ENCODE measurements at regions of chrX and their contacts with region 1.

Region 1: GRCh38 chrX:107776649-107777535 is 641 bp upstream of the NCBP2L start:
- DNase-seq: peak; percentile 13 to 87 (median 81)
- ATAC-seq: peak; percentile 91
- H3K4me3 ChIP-seq: peak overlapping the region; percentile 63
- H3K4me3 Mint-ChIP-seq: peak overlapping the region; percentile 80 to 96 (median 92)
- H3K27ac ChIP-seq: peak overlapping the region; percentile 64
- H3K27ac Mint-ChIP-seq: peak overlapping the region; percentile 82 to 95 (median 92)
- H3K4me1 ChIP-seq: no peaks in the 10 kb centered on the region
- H3K4me1 Mint-ChIP-seq: peaks cover 8 to 31% (median 19%) of the 10 kb centered on the region in 7 donors
- H3K27me3 ChIP-seq: no peaks in the 10 kb centered on the region
- H3K27me3 Mint-ChIP-seq: peaks cover 0 to 22% (median 0%) of the 10 kb centered on the region in 5 donors

Region 2: GRCh38 chrX:106894392-106894909 is 882.4 kb before region 1 on chrX:
- CTCF ChIA-PET with region 1: interaction called, 3 read pairs
- POLR2A ChIA-PET with region 1: no interaction called
- intact Hi-C with region 1: loop called (anchors 1 kb)
- DNase-seq: peak; percentile 13 to 57 (median 42)
- ATAC-seq: peak; percentile 74
- H3K4me3 ChIP-seq: no peak overlapping the region
- H3K4me3 Mint-ChIP-seq: no peak overlapping the region
- H3K27ac ChIP-seq: no peak overlapping the region
- H3K27ac Mint-ChIP-seq: no peak overlapping the region
- H3K4me1 ChIP-seq: no peaks in the 10 kb centered on the region
- H3K4me1 Mint-ChIP-seq: no peaks in the 10 kb centered on the region
- H3K27me3 ChIP-seq: no peaks in the 10 kb centered on the region
- H3K27me3 Mint-ChIP-seq: peaks cover 0 to 3% (median 0%) of the 10 kb centered on the region in 5 donors

Region 3: DNA sequence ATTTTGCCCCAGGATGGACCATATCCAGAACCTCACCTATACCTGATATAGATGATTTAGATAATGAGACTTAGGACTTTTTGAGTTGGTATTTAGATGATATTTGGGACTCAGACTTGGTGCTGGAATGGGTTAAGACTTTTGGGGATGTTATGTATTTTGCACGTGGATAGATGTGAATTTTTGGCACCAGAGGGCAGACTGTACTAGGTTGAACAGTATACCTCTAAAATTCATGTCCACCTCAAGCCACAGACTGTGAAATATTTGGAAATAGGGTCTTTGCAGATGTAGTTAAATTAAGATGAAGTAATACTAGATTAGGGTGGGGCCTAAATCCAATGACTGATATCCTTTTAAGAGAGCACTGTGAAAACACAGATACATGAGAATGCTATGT is 673.9 kb before region 1 on chrX:
- CTCF ChIA-PET with region 1: no interaction called
- POLR2A ChIA-PET with region 1: no interaction called
- intact Hi-C with region 1: loop called in 1 of 2 experiments (anchors 1 kb)
- DNase-seq: no peak
- ATAC-seq: no peak
- H3K4me3 ChIP-seq: no peak overlapping the region
- H3K4me3 Mint-ChIP-seq: no peak overlapping the region
- H3K27ac ChIP-seq: no peak overlapping the region
- H3K27ac Mint-ChIP-seq: no peak overlapping the region
- H3K4me1 ChIP-seq: no peaks in the 10 kb centered on the region
- H3K4me1 Mint-ChIP-seq: peaks cover 4 to 27% (median 14%) of the 10 kb centered on the region in 7 donors
- H3K27me3 ChIP-seq: no peaks in the 10 kb centered on the region
- H3K27me3 Mint-ChIP-seq: no peaks in the 10 kb centered on the region

Region 4: GRCh38 chrX:107672955-107673378 is 103.9 kb before region 1 on chrX:
- CTCF ChIA-PET with region 1: interaction called, 48 read pairs
- POLR2A ChIA-PET with region 1: interaction called, 47 read pairs
- intact Hi-C with region 1: loop called (anchors 1 kb)
- DNase-seq: peak; percentile 41 to 93 (median 88)
- ATAC-seq: peak; percentile 69
- H3K4me3 ChIP-seq: peak overlapping the region; percentile 58
- H3K4me3 Mint-ChIP-seq: peak overlapping the region; percentile 65 to 90 (median 84)
- H3K27ac ChIP-seq: peak overlapping the region; percentile 99
- H3K27ac Mint-ChIP-seq: peak overlapping the region; percentile 96 to 100 (median 98)
- H3K4me1 ChIP-seq: peaks cover 34 to 36% of the 10 kb centered on the region in 2 donors
- H3K4me1 Mint-ChIP-seq: peaks cover 14 to 72% (median 44%) of the 10 kb centered on the region in 7 donors
- H3K27me3 ChIP-seq: no peaks in the 10 kb centered on the region
- H3K27me3 Mint-ChIP-seq: no peaks in the 10 kb centered on the region

Region 5: DNA sequence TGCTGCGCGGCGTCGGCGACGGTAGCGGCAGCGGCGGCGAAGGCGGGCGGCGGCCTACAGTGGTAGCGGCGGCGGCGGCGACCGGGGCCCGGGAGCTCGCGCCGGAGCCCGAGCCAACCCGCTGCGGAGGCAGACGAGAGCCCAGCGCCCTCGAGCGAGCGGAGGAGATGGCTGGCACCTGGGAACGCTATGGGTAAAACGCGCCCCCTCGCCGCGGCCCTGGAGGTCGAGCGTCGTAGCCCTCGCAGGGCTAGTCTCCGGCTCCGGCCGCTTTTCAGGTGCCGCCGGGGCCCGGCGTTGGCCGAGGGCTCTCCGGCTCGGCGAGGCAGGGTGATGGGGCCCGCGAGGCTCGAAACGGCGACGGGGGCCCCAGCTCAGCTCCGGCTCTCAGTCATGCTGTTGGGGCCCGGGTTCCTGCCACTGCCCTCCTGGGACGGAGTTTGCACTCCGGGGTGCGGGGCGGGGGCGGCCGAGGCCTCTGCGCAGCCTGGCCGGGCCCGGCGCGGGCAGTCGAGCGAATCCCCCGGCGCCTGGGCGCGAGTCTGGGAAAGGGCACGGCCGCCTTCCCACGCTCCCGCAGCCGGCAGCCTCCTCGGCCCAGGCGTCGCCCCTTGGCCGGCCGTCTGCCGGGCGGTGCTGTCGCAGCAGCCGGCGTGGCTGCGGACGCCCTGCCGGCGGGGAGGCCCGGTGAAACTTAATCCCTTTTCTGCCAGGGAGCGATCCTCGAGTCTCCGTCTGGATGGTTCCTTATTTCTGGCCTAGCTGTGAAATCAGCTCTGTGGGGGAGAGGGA is 49.5 kb after region 1 on chrX:
- CTCF ChIA-PET with region 1: interaction called, 3 read pairs
- POLR2A ChIA-PET with region 1: interaction called, 5 read pairs
- intact Hi-C with region 1: loop called in 1 of 2 experiments (anchors 2 kb)
- DNase-seq: peak in 8 of 9 donors; percentile 9 to 53 (median 46)
- ATAC-seq: peak; percentile 77
- H3K4me3 ChIP-seq: peak overlapping the region; percentile 57
- H3K4me3 Mint-ChIP-seq: peak overlapping the region; percentile 78 to 92 (median 89)
- H3K27ac ChIP-seq: peak overlapping the region; percentile 80
- H3K27ac Mint-ChIP-seq: peak overlapping the region; percentile 44 to 95 (median 92)
- H3K4me1 ChIP-seq: peaks cover 0 to 7% of the 10 kb centered on the region in 2 donors
- H3K4me1 Mint-ChIP-seq: peaks cover 11 to 65% (median 43%) of the 10 kb centered on the region in 7 donors
- H3K27me3 ChIP-seq: no peaks in the 10 kb centered on the region
- H3K27me3 Mint-ChIP-seq: peaks cover 0 to 20% (median 0%) of the 10 kb centered on the region in 5 donors

Region 6: DNA sequence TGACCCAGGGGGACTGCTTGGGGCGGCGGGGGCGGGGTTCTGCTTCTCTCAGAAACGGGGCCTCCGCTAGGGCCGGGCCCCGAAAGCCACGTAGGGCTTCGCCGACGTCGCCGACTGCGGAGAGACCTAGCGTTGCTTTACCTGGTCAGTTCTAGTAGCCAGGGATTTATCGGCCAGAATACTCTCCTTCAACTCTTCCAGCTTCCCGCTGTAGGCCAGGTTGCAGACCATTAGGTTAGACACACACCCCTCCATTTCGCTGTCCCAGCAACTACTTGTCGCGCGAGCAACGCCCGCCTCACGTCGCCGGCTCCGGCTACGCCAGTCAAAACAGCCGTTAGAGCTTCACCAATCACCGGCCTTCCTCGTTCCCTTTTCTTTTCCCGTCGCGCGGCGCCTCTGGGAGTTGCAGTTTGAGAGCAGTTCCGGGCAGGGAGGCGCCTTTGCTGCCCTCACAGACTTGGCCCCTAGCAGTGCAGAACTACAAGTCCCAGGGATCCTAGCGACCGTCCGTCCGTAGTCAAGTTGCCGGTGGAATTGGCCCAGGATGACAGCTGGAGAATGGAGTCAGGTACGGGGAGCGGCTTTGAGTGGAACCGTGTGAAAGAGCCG is 314.5 kb after region 1 on chrX and contains the starts of genes ATG4A and PSMD10:
- CTCF ChIA-PET with region 1: no interaction called
- POLR2A ChIA-PET with region 1: no interaction called
- intact Hi-C with region 1: loop called (anchors 1 to 10 kb)
- DNase-seq: peak; percentile 65 to 91 (median 85)
- ATAC-seq: peak; percentile 97
- H3K4me3 ChIP-seq: peak within 1 kb of the TSS; percentile 85
- H3K4me3 Mint-ChIP-seq: no peak within 1 kb of the TSS
- H3K27ac ChIP-seq: peak within 1 kb of the TSS; percentile 88
- H3K27ac Mint-ChIP-seq: no peak within 1 kb of the TSS
- H3K4me1 ChIP-seq: no peaks in the 10 kb centered on the region
- H3K4me1 Mint-ChIP-seq: peaks cover 0 to 28% (median 15%) of the 10 kb centered on the region in 7 donors
- H3K27me3 ChIP-seq: no peaks in the 10 kb centered on the region
- H3K27me3 Mint-ChIP-seq: no peaks in the 10 kb centered on the region
- total RNA-seq, gene ATG4A: 6.7 to 11.4 (median 7.5) TPM
- total RNA-seq, gene PSMD10: 17.6 to 36.8 (median 22.1) TPM